Sigmoid colon (tissue), 7 donors: ENCODE measurements at regions of chr1 and their contacts with region 1.

Region 1: DNA sequence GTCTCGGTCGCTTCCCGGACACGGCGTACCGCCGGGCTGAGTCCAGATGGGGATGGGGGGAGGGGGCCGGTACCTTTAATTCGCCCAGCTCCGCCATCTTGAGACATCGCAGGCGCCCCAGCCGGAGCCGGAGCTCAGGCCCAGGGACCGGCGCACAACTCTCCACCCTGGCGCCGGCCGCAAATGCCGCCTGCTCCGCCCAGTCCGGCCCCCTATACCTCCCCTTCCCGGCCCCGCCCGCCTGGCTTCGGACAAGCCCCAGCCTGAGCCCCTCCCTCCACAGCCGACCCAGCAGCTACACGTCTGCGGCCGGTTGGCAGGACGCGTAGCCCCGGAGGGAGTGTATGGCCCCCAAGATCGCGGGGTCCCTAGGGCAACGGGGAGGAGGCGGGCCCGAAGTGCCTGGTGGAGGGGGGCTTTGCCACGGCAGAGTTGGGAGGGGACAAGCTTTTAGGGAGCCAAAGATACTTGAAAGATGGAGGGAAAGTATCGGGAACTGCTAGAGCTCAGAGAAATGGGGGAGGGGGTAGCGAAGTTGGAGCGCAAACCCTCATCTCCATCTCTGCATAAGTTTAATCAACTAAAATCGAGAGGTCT is at the start of gene PIAS3:
- DNase-seq: peak; percentile 98
- H3K4me3 ChIP-seq: peak within 1 kb of the TSS; percentile 57 to 97 (median 82)
- H3K27ac ChIP-seq: peak within 1 kb of the TSS; percentile 94 to 96 (median 95)
- H3K4me1 ChIP-seq: peaks cover 0 to 23% (median 20%) of the 10 kb centered on the region in 4 donors
- H3K27me3 ChIP-seq: no peaks in the 10 kb centered on the region
- CTCF ChIP-seq: no peak
- EP300 ChIP-seq: no peak
- POLR2A ChIP-seq: peak; percentile 73 to 81
- total RNA-seq, gene PIAS3: 17.5 to 37.9 (median 21.7) TPM

Region 2: GRCh38 chr1:145827966-145828692 is 30.9 kb before region 1 on chr1:
- intact Hi-C with region 1: loop called (anchors 2 kb)
- DNase-seq: no peak
- H3K4me3 ChIP-seq: no peak overlapping the region
- H3K27ac ChIP-seq: no peak overlapping the region
- H3K4me1 ChIP-seq: peaks cover 0 to 18% (median 12%) of the 10 kb centered on the region in 4 donors
- H3K27me3 ChIP-seq: no peaks in the 10 kb centered on the region
- CTCF ChIP-seq: no peak
- EP300 ChIP-seq: no peak
- POLR2A ChIP-seq: no peak

Region 3: GRCh38 chr1:145891587-145892485 is 32.8 kb after region 1 on chr1:
- intact Hi-C with region 1: loop called (anchors 5 kb)
- DNase-seq: peak; percentile 98
- H3K4me3 ChIP-seq: peak overlapping the region in 2 of 4 donors; percentile 14 to 24
- H3K27ac ChIP-seq: peak overlapping the region; percentile 78 to 86 (median 78)
- H3K4me1 ChIP-seq: peaks cover 0 to 21% (median 18%) of the 10 kb centered on the region in 4 donors
- H3K27me3 ChIP-seq: no peaks in the 10 kb centered on the region
- CTCF ChIP-seq: peak; percentile 93 to 98 (median 96)
- EP300 ChIP-seq: peak in 1 of 4 donors; percentile 31
- POLR2A ChIP-seq: no peak

Region 4: GRCh38 chr1:145918144-145918992 is 59.4 kb after region 1 on chr1 and contains the start of gene PEX11B:
- intact Hi-C with region 1: loop called (anchors 5 kb)
- DNase-seq: peak; percentile 93
- H3K4me3 ChIP-seq: peak within 1 kb of the TSS; percentile 61 to 96 (median 82)
- H3K27ac ChIP-seq: peak within 1 kb of the TSS; percentile 78 to 92 (median 88)
- H3K4me1 ChIP-seq: peaks cover 0 to 30% (median 26%) of the 10 kb centered on the region in 4 donors
- H3K27me3 ChIP-seq: no peaks in the 10 kb centered on the region
- CTCF ChIP-seq: no peak
- EP300 ChIP-seq: peak in 1 of 4 donors; percentile 17
- POLR2A ChIP-seq: peak in 1 of 2 donors; percentile 31
- total RNA-seq, gene PEX11B: 20.2 to 22.5 (median 20.6) TPM

Region 5: GRCh38 chr1:145957443-145958319 is 98.7 kb after region 1 on chr1 and contains the start of gene LIX1L:
- intact Hi-C with region 1: loop called (anchors 5 kb)
- DNase-seq: peak; percentile 99
- H3K4me3 ChIP-seq: peak within 1 kb of the TSS; percentile 62 to 95 (median 74)
- H3K27ac ChIP-seq: peak within 1 kb of the TSS; percentile 95 to 100 (median 96)
- H3K4me1 ChIP-seq: peaks cover 0 to 85% (median 71%) of the 10 kb centered on the region in 4 donors
- H3K27me3 ChIP-seq: no peaks in the 10 kb centered on the region
- CTCF ChIP-seq: no peak
- EP300 ChIP-seq: peak in 2 of 4 donors; percentile 39 to 59
- POLR2A ChIP-seq: peak; percentile 74 to 84
- total RNA-seq, gene LIX1L: 26.9 to 42.5 (median 36.0) TPM